Activated B cell treated with CpG ODN at 0.5 μM for 24 hours (primary cell): ENCODE measurements at regions of chr1 and their contacts with region 1.

Region 1: GRCh38 chr1:167687919-167688519 is 33.8 kb upstream of the MPZL1 start:
- DNase-seq: no peak
- ATAC-seq: peak; percentile 83
- H3K4me3 Mint-ChIP-seq: no peak overlapping the region
- H3K27ac Mint-ChIP-seq: peak overlapping the region; percentile 46
- H3K4me1 Mint-ChIP-seq: peaks cover 45% of the 10 kb centered on the region
- H3K27me3 Mint-ChIP-seq: no peaks in the 10 kb centered on the region
- CTCF ChIP-seq: peak; percentile 81

Region 2: GRCh38 chr1:166933633-166934032 is 754.4 kb before region 1 on chr1:
- CTCF ChIA-PET with region 1: no interaction called
- POLR2A ChIA-PET with region 1: no interaction called
- intact Hi-C with region 1: no loop called
- DNase-seq: no peak
- ATAC-seq: no peak
- H3K4me3 Mint-ChIP-seq: no peak overlapping the region
- H3K27ac Mint-ChIP-seq: no peak overlapping the region
- H3K4me1 Mint-ChIP-seq: peaks cover 17% of the 10 kb centered on the region
- H3K27me3 Mint-ChIP-seq: no peaks in the 10 kb centered on the region
- CTCF ChIP-seq: no peak

Region 3: GRCh38 chr1:167553136-167554027 is 134.6 kb before region 1 on chr1 and contains the start of gene CREG1:
- CTCF ChIA-PET with region 1: interaction called, 13 read pairs
- POLR2A ChIA-PET with region 1: no interaction called
- intact Hi-C with region 1: loop called (anchors 1 kb)
- DNase-seq: peak; percentile 84
- ATAC-seq: peak; percentile 99
- H3K4me3 Mint-ChIP-seq: peak within 1 kb of the TSS; percentile 86
- H3K27ac Mint-ChIP-seq: peak within 1 kb of the TSS; percentile 41
- H3K4me1 Mint-ChIP-seq: peaks cover 19% of the 10 kb centered on the region
- H3K27me3 Mint-ChIP-seq: no peaks in the 10 kb centered on the region
- CTCF ChIP-seq: no peak
- total RNA-seq, gene CREG1: 3.1 and 3.8 TPM in 2 replicates

Region 4: DNA sequence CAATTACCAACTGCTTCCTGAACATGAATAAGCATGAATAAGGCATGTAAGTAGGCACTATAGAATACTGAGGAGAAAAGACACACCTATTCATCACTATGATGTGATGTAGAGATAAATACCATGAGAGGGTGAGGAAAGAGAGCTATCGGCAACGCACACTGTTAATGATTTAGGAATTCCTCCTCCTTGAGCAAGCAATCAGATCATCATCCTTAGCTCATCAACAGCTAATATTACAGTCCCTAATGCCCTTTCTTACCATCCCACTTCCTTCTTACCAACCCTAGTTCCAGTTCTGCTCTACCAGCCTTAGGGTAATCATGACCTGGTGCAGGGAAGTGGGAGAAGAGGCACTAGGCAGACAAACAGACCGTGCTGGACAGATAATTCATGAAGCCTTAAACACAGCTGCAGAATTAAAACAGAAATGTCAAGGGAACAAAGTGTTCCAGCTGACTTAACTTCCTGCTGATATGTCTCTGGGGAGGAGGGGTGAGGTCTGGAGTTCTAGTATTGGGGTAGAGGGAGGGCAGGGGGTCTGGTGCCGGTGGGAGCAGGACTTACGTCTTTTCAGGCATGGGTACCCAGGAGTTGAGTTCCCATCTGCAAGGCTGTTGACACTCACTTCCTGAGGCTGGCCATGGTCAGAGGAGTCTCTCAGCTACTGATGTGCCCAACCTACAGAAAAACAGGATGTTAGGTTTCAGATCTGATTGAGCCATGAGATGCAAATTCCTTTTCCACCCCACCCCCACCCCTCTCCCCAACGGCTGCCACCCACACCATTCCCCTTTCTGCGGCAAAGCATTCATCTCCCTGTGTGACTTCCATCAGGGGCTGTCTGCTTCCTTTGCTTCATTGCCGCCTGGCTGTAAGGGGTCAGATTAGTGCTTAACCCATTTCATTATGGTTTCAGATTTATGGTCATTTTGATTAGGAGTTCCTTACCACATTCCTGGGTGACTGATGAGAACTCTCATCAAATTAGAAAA is 70.6 kb before region 1 on chr1:
- CTCF ChIA-PET with region 1: interaction called, 10 read pairs
- POLR2A ChIA-PET with region 1: interaction called, 6 read pairs
- intact Hi-C with region 1: loop called (anchors 1 kb)
- DNase-seq: peak; percentile 62
- ATAC-seq: peak; percentile 89
- H3K4me3 Mint-ChIP-seq: peak overlapping the region; percentile 77
- H3K27ac Mint-ChIP-seq: peak overlapping the region; percentile 94
- H3K4me1 Mint-ChIP-seq: peaks cover 92% of the 10 kb centered on the region
- H3K27me3 Mint-ChIP-seq: no peaks in the 10 kb centered on the region
- CTCF ChIP-seq: no peak

Region 5: GRCh38 chr1:167650269-167651160 is 37.5 kb before region 1 on chr1:
- CTCF ChIA-PET with region 1: interaction called, 9 read pairs
- POLR2A ChIA-PET with region 1: interaction called, 7 read pairs
- intact Hi-C with region 1: loop called (anchors 1 kb)
- DNase-seq: no peak
- ATAC-seq: peak; percentile 68
- H3K4me3 Mint-ChIP-seq: peak overlapping the region; percentile 73
- H3K27ac Mint-ChIP-seq: peak overlapping the region; percentile 93
- H3K4me1 Mint-ChIP-seq: peaks cover 94% of the 10 kb centered on the region
- H3K27me3 Mint-ChIP-seq: no peaks in the 10 kb centered on the region
- CTCF ChIP-seq: no peak

Region 6: GRCh38 chr1:167708940-167709389 is 20.9 kb after region 1 on chr1:
- CTCF ChIA-PET with region 1: interaction called, 12 read pairs
- POLR2A ChIA-PET with region 1: interaction called, 4 read pairs
- intact Hi-C with region 1: loop called (anchors 2 kb)
- DNase-seq: peak; percentile 53
- ATAC-seq: peak; percentile 72
- H3K4me3 Mint-ChIP-seq: peak overlapping the region; percentile 77
- H3K27ac Mint-ChIP-seq: peak overlapping the region; percentile 89
- H3K4me1 Mint-ChIP-seq: peaks cover 84% of the 10 kb centered on the region
- H3K27me3 Mint-ChIP-seq: no peaks in the 10 kb centered on the region
- CTCF ChIP-seq: no peak